Panc1 (cell line): ENCODE measurements at regions of chr4 and their contacts with region 1.

Region 1: DNA sequence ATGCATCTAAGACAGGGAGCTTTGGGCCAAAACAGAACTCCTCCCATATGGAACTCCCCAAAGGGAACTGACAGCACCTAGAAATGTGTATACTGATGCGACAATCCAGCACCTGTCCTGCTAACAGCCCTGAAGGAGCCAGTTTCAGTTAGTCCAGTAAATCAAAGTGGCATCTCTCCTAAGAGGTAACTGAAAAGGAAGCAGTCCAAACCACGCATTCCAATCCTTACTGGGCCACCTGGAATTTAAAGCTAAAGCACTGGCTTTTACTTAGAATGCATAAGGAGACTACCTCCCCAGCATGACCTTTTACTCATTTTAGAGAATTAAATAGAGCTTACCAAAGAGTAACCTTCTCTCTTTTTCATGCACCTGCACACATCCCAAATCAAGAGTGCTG is 586.8 kb upstream of the PITX2 start:
- DNase-seq: no peak
- ATAC-seq: no peak
- H3K4me3 ChIP-seq: no peak overlapping the region
- H3K27ac ChIP-seq: no peak overlapping the region
- H3K4me1 ChIP-seq: no peaks in the 10 kb centered on the region
- H3K27me3 ChIP-seq: no peaks in the 10 kb centered on the region
- CTCF ChIP-seq: no peak

Region 2: GRCh38 chr4:111143510-111143909 is 66.2 kb before region 1 on chr4:
- CTCF ChIA-PET with region 1: no interaction called
- POLR2A ChIA-PET with region 1: no interaction called
- in situ Hi-C with region 1: no loop called
- intact Hi-C with region 1: no loop called
- DNase-seq: no peak
- ATAC-seq: no peak
- H3K4me3 ChIP-seq: no peak overlapping the region
- H3K27ac ChIP-seq: no peak overlapping the region
- H3K4me1 ChIP-seq: no peaks in the 10 kb centered on the region
- H3K27me3 ChIP-seq: no peaks in the 10 kb centered on the region
- CTCF ChIP-seq: no peak

Region 3: DNA sequence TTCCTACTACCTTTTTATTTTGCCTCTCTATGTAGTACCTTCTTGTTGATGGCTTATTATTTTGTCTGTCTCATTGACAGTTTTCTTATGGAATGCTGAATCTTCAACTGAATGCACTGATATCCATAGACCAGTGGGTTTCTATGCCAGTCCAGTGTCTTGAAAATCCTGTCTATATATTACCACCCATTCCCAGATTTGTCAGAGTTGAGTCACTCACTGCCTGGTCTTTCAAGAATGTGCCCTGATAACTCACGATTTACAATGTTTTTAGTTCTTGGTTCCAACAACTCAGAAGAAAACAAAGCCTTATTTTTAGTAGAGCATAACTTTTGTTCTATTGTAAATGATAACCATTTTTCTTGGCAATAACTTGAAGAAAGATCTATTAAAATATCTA is 19.2 kb after region 1 on chr4:
- CTCF ChIA-PET with region 1: no interaction called
- POLR2A ChIA-PET with region 1: no interaction called
- in situ Hi-C with region 1: no loop called
- intact Hi-C with region 1: loop called (anchors 1 kb)
- DNase-seq: no peak
- ATAC-seq: no peak
- H3K4me3 ChIP-seq: no peak overlapping the region
- H3K27ac ChIP-seq: no peak overlapping the region
- H3K4me1 ChIP-seq: no peaks in the 10 kb centered on the region
- H3K27me3 ChIP-seq: no peaks in the 10 kb centered on the region
- CTCF ChIP-seq: no peak